Activated CD4-positive, alpha-beta memory T cell treated with anti-CD3 and anti-CD28 coated beads for 36 hours (primary cell): ENCODE measurements at regions of chr15 and their contacts with region 1.

Region 1: GRCh38 chr15:89358755-89359439 is 24.3 kb upstream of the POLG start:
- DNase-seq: peak; percentile 89
- H3K4me3 Mint-ChIP-seq: peak overlapping the region; percentile 76
- H3K27ac Mint-ChIP-seq: no peak overlapping the region
- H3K4me1 Mint-ChIP-seq: peaks cover 5% of the 10 kb centered on the region
- H3K27me3 Mint-ChIP-seq: peaks cover 72% of the 10 kb centered on the region

Region 2: DNA sequence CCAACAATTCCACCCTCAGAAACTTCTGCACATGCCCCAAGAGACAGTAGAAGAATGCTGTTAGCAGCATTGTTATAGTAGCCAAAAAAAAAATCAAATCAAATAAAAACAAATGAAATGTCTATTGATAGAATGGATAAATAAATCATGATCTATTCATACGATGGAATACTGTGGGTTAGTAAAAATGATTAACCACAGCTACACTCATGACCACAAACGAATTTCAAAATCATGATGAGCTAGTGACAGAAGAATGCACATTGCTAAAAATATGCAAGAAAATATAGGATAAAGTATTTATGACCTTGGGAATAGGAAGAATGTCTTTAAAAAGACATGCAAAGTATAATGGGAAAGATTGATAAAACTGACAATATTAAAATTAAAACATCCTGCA is 613.2 kb before region 1 on chr15:
- CTCF ChIA-PET with region 1: no interaction called
- POLR2A ChIA-PET with region 1: no interaction called
- intact Hi-C with region 1: no loop called
- DNase-seq: no peak
- H3K4me3 Mint-ChIP-seq: no peak overlapping the region
- H3K27ac Mint-ChIP-seq: no peak overlapping the region
- H3K4me1 Mint-ChIP-seq: no peaks in the 10 kb centered on the region
- H3K27me3 Mint-ChIP-seq: peaks cover 27% of the 10 kb centered on the region

Region 3: GRCh38 chr15:89346516-89347231 is 12.2 kb before region 1 on chr15:
- CTCF ChIA-PET with region 1: interaction called, 44 read pairs
- POLR2A ChIA-PET with region 1: interaction called, 3 read pairs
- intact Hi-C with region 1: no loop called
- DNase-seq: no peak
- H3K4me3 Mint-ChIP-seq: no peak overlapping the region
- H3K27ac Mint-ChIP-seq: no peak overlapping the region
- H3K4me1 Mint-ChIP-seq: peaks cover 11% of the 10 kb centered on the region
- H3K27me3 Mint-ChIP-seq: peaks cover 8% of the 10 kb centered on the region

Region 4: GRCh38 chr15:89389841-89390603 is 31.1 kb after region 1 on chr15:
- CTCF ChIA-PET with region 1: interaction called, 47 read pairs
- POLR2A ChIA-PET with region 1: no interaction called
- intact Hi-C with region 1: no loop called
- DNase-seq: no peak
- H3K4me3 Mint-ChIP-seq: no peak overlapping the region
- H3K27ac Mint-ChIP-seq: no peak overlapping the region
- H3K4me1 Mint-ChIP-seq: no peaks in the 10 kb centered on the region
- H3K27me3 Mint-ChIP-seq: peaks cover 14% of the 10 kb centered on the region

Region 5: DNA sequence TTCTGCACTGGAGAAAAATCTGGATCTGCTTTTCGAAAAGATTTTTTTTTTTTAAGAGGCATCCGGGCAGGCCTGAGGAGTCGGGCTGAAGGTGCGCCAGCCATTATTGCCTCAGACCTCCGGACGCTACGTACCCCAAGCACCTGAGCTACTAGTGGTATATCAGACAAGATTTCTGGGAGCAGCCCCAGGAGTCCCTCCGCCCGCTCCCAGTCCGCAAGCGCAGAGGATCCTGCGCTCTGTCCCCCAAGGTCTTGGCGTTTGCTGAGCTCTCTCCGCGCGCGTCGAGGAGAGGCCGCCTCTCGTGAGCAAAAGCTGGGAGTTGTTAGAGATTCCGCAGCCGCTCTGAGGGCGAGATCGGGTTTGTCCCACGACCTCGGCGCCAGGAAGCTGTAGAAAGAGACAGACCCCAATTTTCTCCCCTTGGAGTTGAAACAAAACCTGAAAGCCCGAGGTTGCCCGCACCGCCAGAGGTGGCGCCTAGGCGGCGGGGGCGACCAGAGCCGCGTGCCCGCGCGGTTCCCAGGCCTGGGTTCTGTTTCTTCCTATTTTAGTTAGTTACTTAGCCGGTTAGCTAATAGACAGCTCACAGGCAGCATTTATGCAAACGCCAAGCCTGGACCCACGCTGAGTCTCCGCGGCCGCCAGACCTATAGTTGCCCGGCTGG is 48.2 kb after region 1 on chr15:
- CTCF ChIA-PET with region 1: interaction called, 71 read pairs
- POLR2A ChIA-PET with region 1: no interaction called
- intact Hi-C with region 1: no loop called
- DNase-seq: no peak
- H3K4me3 Mint-ChIP-seq: peak overlapping the region; percentile 8
- H3K27ac Mint-ChIP-seq: no peak overlapping the region
- H3K4me1 Mint-ChIP-seq: peaks cover 41% of the 10 kb centered on the region
- H3K27me3 Mint-ChIP-seq: peaks cover 87% of the 10 kb centered on the region

Region 6: DNA sequence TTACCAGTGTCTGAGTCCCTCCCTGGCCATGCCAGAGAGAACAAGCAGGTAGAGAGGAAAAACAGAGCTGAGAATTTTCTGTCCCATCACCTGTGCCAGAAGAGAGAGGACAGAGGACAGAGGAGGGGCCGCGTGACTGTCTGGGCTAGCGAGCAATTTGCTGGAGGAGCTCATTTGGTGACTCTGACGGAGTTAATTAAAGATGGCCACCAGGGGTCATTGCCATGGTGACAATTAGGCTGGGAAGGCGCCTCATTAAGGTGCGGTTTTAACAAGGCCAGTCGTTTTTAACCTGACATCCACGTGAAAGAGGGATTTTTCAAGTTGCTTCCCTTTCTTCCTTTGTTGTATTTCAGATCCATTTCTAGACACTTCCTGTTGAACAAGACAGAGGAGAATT is 65.1 kb after region 1 on chr15:
- CTCF ChIA-PET with region 1: interaction called, 185 read pairs
- POLR2A ChIA-PET with region 1: no interaction called
- intact Hi-C with region 1: no loop called
- DNase-seq: no peak
- H3K4me3 Mint-ChIP-seq: no peak overlapping the region
- H3K27ac Mint-ChIP-seq: no peak overlapping the region
- H3K4me1 Mint-ChIP-seq: no peaks in the 10 kb centered on the region
- H3K27me3 Mint-ChIP-seq: peaks cover 36% of the 10 kb centered on the region

Region 7: GRCh38 chr15:89436570-89437316 is 77.8 kb after region 1 on chr15:
- CTCF ChIA-PET with region 1: interaction called, 185 read pairs
- POLR2A ChIA-PET with region 1: no interaction called
- intact Hi-C with region 1: no loop called
- DNase-seq: no peak
- H3K4me3 Mint-ChIP-seq: no peak overlapping the region
- H3K27ac Mint-ChIP-seq: no peak overlapping the region
- H3K4me1 Mint-ChIP-seq: no peaks in the 10 kb centered on the region
- H3K27me3 Mint-ChIP-seq: peaks cover 32% of the 10 kb centered on the region

Region 8: GRCh38 chr15:89472785-89473256 is 113.9 kb after region 1 on chr15:
- CTCF ChIA-PET with region 1: interaction called, 33 read pairs
- POLR2A ChIA-PET with region 1: no interaction called
- intact Hi-C with region 1: no loop called
- DNase-seq: peak; percentile 68
- H3K4me3 Mint-ChIP-seq: no peak overlapping the region
- H3K27ac Mint-ChIP-seq: no peak overlapping the region
- H3K4me1 Mint-ChIP-seq: no peaks in the 10 kb centered on the region
- H3K27me3 Mint-ChIP-seq: peaks cover 14% of the 10 kb centered on the region